ENCODE measurements at regions of chr1 and their contacts with region 1.

Region 1: DNA sequence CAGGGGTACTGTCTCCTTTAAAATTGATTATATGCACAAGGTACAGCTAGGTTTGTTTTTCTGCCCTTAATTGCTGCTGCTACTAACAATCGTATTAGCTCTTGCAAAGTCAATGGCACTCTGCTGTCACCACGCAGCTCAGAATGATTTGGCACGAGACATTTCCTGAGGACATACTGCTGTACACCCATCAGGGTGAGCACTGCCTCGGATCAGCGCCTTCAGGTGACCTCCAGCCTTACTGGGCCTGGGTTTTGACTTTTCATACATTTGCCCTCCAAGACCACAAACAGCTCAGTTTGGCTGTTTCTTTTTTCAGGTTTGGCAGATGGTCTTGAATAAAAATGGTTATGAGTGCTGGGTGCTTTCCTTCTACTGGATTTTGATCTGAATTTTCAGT is 110.9 kb downstream of the NTPCR start:
- ATAC-seq: peak in 2 of 8 experiments; percentile 14 to 33
- H3K4me3 ChIP-seq: no peak overlapping the region
- H3K27ac ChIP-seq: no peak overlapping the region
- H3K4me1 ChIP-seq: peaks cover 0 to 2% of the 10 kb centered on the region in 2 donors

Region 2: DNA sequence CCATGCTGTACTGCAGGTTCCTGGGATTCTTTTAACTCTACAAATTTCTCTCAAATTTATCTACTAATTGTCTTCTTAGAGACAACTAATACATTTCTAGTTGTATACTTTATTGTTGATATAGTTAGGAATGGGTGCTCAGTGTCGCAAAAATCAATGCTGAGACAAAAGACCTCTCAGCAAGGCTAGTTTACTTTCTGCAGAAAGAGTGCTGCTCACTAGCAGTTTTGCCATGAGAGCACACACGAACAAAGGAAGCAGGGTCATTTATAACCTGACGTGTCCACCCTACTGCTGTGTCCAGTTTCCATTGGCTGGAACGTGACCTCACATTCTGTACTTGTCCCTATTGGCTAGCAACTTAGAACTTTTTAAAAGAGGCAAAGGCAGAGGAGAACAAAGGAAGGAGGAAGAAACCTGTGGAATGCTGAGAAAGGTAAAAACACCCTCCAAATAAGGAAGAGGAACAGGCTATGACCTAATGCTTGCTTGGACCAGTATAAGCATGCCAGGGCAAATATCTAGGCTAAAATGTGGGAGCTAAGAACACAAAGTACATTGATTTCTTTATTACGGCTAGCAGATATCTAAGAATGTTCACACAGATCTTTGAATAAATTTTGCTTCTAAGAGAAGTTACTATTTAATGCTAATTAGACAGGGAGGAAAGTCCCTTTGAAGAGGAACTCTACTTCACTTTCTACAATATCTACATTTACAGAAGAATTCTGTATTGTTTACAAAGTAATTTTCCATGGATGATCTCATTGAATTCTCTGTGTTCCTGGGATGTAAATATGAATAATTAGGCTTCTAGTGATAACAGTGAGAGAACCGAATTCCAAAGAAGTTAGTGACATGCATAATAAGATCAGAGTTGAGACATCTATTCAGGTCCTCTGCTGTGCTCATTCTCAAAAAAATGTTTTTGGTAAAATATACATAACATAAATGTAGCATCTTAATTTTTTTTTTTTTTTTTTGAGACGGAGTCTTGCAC is 342.0 kb before region 1 on chr1:
- in situ Hi-C with region 1: no loop called
- ATAC-seq: no peak
- H3K4me3 ChIP-seq: no peak overlapping the region
- H3K27ac ChIP-seq: no peak overlapping the region
- H3K4me1 ChIP-seq: no peaks in the 10 kb centered on the region

Region 3: DNA sequence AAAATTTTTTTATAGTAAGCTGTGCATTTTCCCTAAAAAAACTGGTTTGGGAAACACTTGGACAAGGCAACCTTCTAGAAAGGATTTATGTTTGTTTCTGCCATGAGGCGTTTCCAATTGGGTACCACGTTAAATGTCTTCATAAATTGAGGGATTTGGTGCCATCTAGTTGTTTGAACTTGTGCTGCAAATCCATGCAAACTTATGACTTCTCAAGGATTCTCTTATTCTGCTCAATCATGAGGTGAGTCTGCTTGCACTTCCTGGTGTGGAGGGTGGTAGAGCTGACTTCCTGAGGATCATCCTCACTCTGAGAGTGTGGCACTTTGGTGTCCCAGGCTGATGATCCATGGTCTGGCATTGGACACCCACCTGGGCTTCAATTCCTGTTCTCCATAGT is 111.0 kb after region 1 on chr1:
- in situ Hi-C with region 1: loop called in 1 of 9 experiments (anchors 25 kb)
- ATAC-seq: peak in 3 of 8 experiments; percentile 62 to 79 (median 71)
- H3K4me3 ChIP-seq: no peak overlapping the region
- H3K27ac ChIP-seq: no peak overlapping the region
- H3K4me1 ChIP-seq: no peaks in the 10 kb centered on the region

Region 4: DNA sequence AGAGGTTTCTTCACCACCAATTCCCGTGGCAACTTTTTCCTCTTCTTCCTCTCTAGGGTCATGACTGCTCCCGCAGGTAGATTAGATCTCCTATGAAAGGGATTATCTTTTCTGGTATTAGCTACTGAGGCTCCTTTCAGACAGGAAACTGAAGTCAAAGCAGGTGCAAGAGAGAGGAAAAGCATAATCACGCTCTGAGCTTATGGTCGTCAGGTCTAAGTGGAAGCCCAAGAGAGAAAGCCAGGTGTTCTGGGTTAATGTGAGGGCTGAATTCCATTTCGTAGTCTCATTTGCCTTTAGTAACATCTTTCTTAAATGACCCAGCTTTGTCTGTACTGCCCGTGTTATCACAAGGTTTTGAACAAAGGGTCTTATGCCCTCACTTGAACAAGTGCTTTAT is 258.0 kb after region 1 on chr1:
- in situ Hi-C with region 1: no loop called
- ATAC-seq: no peak
- H3K4me3 ChIP-seq: no peak overlapping the region
- H3K27ac ChIP-seq: no peak overlapping the region
- H3K4me1 ChIP-seq: no peaks in the 10 kb centered on the region

Measured in motor neuron (in vitro differentiated cells).